Psoas muscle (tissue), 8 donors: ENCODE measurements at regions of chr6 and their contacts with region 1.

Region 1: DNA sequence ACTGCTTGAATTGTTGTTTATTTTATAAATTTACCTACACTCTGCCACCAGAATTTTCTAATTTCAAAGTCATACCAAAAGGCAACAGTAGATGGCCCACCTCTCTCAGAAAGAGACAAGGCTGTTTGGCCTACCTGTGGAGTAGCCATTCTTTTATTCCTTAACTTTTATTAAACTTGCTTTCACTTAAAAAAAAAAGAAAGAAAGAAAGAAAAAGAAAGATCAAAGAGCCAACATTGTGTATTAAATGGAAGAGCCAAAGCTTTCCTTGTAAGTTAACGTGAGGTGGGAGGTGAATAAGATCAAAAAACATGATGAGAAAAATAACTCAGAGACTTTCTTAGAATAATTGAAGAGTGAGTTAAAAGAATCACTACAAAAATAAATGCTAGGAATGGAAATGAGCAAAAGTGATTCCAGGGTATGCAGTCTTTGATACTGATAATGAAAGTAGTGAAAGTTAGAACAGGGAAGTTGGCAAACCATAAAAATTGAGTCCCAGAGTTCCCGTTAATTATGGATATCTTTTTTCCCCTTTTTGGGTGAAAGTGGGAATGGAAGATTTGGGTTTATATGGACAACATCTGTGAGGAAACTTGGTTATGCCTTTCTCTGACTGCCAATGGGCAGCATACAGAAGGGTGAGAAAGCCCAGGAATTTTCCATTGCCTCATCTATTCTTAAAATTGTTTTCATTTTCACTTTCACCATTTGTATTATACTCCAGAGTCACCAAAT is 35.9 kb upstream of the MYB start:
- DNase-seq: no peak
- ATAC-seq: peak in 1 of 4 donors; percentile 60
- H3K4me3 ChIP-seq: no peak overlapping the region
- H3K27ac ChIP-seq: no peak overlapping the region
- H3K4me1 ChIP-seq: no peaks in the 10 kb centered on the region
- H3K27me3 ChIP-seq: no peaks in the 10 kb centered on the region
- CTCF ChIP-seq: peak; percentile 62

Region 2: GRCh38 chr6:135224037-135224647 is 78.9 kb after region 1 on chr6:
- intact Hi-C with region 1: no loop called
- DNase-seq: no peak
- ATAC-seq: no peak
- H3K4me3 ChIP-seq: no peak overlapping the region
- H3K27ac ChIP-seq: no peak overlapping the region
- H3K4me1 ChIP-seq: no peaks in the 10 kb centered on the region
- H3K27me3 ChIP-seq: no peaks in the 10 kb centered on the region
- CTCF ChIP-seq: no peak

Region 3: GRCh38 chr6:135257631-135258405 is 112.6 kb after region 1 on chr6:
- intact Hi-C with region 1: loop called (anchors 2 to 10 kb)
- DNase-seq: no peak
- ATAC-seq: no peak
- H3K4me3 ChIP-seq: no peak overlapping the region
- H3K27ac ChIP-seq: no peak overlapping the region
- H3K4me1 ChIP-seq: no peaks in the 10 kb centered on the region
- H3K27me3 ChIP-seq: no peaks in the 10 kb centered on the region
- CTCF ChIP-seq: peak; percentile 23

Region 4: DNA sequence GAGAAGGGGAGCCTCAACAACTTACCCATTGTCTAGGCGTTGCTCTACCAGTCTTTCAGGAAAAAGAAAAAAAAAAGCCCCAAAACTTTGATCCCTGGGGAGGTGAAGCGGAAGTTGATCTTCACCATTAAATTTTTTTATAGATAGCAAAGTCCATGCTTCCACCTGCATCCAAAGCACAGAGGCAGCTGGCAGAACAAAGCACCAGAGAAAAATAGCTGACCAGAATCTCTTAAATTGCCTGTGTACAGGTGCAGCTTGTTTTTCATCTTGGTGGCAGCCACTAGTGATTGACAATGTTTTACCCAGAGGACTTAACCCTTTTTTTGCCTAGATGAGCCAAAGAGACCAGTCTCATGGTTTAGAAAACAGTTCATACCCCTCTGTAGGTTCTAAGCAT is 121.9 kb after region 1 on chr6:
- intact Hi-C with region 1: loop called in 1 of 2 experiments (anchors 10 kb)
- DNase-seq: no peak
- ATAC-seq: no peak
- H3K4me3 ChIP-seq: no peak overlapping the region
- H3K27ac ChIP-seq: no peak overlapping the region
- H3K4me1 ChIP-seq: no peaks in the 10 kb centered on the region
- H3K27me3 ChIP-seq: no peaks in the 10 kb centered on the region
- CTCF ChIP-seq: no peak

Region 5: DNA sequence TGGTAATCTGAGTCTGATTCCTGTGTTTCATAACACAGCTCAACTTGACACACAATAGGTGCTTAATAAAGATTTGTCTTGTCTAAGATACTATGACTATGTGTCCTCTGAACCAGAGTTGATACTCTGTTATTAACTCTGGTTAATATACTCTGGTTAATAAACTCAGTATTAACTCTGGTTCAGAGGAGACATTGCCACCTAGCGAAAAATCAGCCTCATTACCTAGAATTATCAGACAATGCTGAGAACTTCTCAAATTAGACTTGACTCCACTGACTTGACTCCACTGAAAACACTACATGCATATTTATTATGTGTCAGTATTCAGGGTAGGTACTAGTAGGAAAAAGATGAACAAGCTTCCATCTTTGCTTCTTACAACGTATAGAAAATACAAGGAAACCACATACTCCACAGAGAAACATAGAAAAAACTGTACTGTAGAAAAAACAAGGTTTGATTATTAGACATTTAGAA is 278.5 kb after region 1 on chr6:
- intact Hi-C with region 1: loop called (anchors 5 to 10 kb)
- DNase-seq: no peak
- ATAC-seq: peak in 2 of 4 donors; percentile 37 to 52
- H3K4me3 ChIP-seq: no peak overlapping the region
- H3K27ac ChIP-seq: no peak overlapping the region
- H3K4me1 ChIP-seq: no peaks in the 10 kb centered on the region
- H3K27me3 ChIP-seq: no peaks in the 10 kb centered on the region
- CTCF ChIP-seq: peak; percentile 47